Calu3 (cell line): ENCODE measurements at regions of chr4 and their contacts with region 1.

Region 1: DNA sequence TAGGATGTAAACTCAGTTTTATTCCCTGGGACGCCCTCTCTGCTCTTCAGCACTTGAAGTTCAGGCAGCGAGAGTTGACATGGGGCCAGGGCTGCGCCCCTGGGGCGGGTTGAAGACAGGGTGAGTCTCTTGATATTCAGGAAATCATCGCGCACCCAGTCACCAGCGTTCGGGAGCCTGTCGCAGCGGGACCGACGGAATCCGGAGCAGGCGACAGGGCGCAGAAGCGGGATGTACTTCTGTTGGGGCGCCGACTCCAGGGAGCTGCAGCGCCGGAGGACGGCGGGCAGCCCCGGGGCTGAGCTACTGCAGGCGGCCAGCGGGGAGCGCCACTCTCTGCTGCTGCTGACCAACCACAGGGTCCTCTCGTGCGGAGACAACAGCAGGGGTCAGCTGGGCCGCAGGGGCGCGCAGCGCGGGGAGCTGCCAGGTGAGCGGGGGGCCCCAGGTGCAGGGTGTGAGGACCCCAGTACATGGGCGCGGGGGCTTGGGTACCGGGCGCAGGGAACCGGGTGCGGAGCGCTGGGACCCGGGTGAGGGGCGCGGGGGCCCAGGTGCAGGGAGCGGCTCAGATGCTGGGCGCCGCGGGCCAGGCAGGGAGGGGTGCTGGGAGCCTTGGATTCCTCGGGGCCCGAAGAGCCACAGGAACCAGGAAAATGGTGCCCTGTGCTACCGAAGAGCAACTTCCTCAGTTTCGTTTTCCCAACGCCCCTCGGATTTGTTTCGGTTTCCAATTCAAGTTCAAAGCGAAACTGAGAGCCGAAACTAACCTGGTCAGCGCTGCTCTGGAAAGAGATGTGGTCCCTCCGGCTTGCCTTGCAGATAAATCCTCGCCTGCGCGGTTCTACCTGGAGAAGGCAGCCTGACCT is at the start of gene HERC6:
- DNase-seq: peak; percentile 71
- H3K4me3 Mint-ChIP-seq: peak within 1 kb of the TSS; percentile 81
- H3K27ac Mint-ChIP-seq: peak within 1 kb of the TSS; percentile 81
- H3K4me1 Mint-ChIP-seq: no peaks in the 10 kb centered on the region
- H3K27me3 Mint-ChIP-seq: no peaks in the 10 kb centered on the region
- CTCF ChIP-seq: peak; percentile 56
- total RNA-seq, gene HERC6: 22.0 and 53.3 TPM in 2 replicates

Region 2: GRCh38 chr4:88284439-88285234 is 94.3 kb before region 1 on chr4 and contains the start of gene PPM1K:
- CTCF ChIA-PET with region 1: interaction called, 9 read pairs
- intact Hi-C with region 1: loop called (anchors 10 kb)
- DNase-seq: peak; percentile 97
- H3K4me3 Mint-ChIP-seq: peak within 1 kb of the TSS; percentile 86
- H3K27ac Mint-ChIP-seq: peak within 1 kb of the TSS; percentile 89
- H3K4me1 Mint-ChIP-seq: peaks cover 22% of the 10 kb centered on the region
- H3K27me3 Mint-ChIP-seq: no peaks in the 10 kb centered on the region
- CTCF ChIP-seq: no peak
- total RNA-seq, gene PPM1K: 15.3 and 29.3 TPM in 2 replicates

Region 3: GRCh38 chr4:88456757-88457306 is 77.9 kb after region 1 on chr4 and contains the start of gene HERC5:
- CTCF ChIA-PET with region 1: interaction called, 3 read pairs
- intact Hi-C with region 1: loop called (anchors 2 kb)
- DNase-seq: peak; percentile 88
- H3K4me3 Mint-ChIP-seq: peak within 1 kb of the TSS; percentile 78
- H3K27ac Mint-ChIP-seq: peak within 1 kb of the TSS; percentile 85
- H3K4me1 Mint-ChIP-seq: no peaks in the 10 kb centered on the region
- H3K27me3 Mint-ChIP-seq: no peaks in the 10 kb centered on the region
- CTCF ChIP-seq: peak; percentile 35
- total RNA-seq, gene HERC5: 20.1 and 44.2 TPM in 2 replicates

Region 4: DNA sequence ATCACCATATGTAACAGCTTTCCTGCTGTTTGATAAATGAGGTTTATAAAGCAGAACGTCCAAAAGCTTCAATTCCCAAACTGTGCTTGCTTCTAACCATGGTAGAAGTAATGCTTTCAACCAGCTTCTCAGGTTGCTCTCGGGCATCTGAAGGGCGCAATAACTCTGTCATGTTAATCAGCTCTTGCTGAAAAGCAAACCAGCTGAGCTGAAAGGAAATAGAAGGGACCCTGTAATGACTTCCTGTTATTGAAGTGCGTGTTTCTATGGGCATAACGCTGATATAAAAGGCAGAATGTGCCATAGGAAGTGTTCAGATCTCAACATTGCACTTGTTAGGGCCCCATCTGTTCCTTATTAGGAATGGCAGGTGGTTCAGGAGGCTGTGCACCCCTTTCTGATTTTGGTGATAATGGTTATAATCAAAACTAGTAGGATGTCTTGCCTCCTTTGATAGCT is 234.5 kb after region 1 on chr4:
- CTCF ChIA-PET with region 1: no interaction called
- intact Hi-C with region 1: no loop called
- DNase-seq: peak; percentile 13
- H3K4me3 Mint-ChIP-seq: peak overlapping the region; percentile 30
- H3K27ac Mint-ChIP-seq: peak overlapping the region; percentile 98
- H3K4me1 Mint-ChIP-seq: peaks cover 49% of the 10 kb centered on the region
- H3K27me3 Mint-ChIP-seq: no peaks in the 10 kb centered on the region
- CTCF ChIP-seq: no peak